ENCODE measurements at regions of chr5 and their contacts with region 1.

Region 1: GRCh38 chr5:126745259-126745992 is 31.5 kb upstream of the LMNB1 start:
- DNase-seq: no peak
- H3K4me3 Mint-ChIP-seq: no peak overlapping the region
- H3K27ac Mint-ChIP-seq: no peak overlapping the region
- H3K4me1 Mint-ChIP-seq: peaks cover 37% of the 10 kb centered on the region
- H3K27me3 Mint-ChIP-seq: no peaks in the 10 kb centered on the region

Region 2: DNA sequence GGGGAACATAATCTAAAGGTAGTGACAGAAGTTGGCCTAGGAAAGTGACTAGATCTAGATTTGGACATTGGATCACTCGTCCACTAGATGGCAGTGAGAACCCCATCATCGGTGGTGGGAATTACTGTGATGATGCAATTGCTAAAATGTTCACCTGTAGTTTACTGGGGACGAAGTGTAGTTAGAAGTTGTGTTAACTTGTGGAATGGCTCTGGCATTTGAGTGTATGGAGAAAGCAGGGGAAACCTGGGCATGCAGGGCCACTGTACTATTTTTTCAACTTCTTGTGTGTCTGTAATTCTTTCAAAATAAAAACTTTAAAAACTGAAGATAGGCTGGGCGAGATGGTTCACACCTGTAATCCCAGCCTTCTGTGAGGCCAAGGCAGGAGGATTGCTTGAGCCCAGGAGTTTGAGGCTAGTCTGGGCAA is 69.2 kb before region 1 on chr5:
- intact Hi-C with region 1: loop called (anchors 2 kb)
- DNase-seq: peak; percentile 91
- H3K4me3 Mint-ChIP-seq: no peak overlapping the region
- H3K27ac Mint-ChIP-seq: no peak overlapping the region
- H3K4me1 Mint-ChIP-seq: peaks cover 22% of the 10 kb centered on the region
- H3K27me3 Mint-ChIP-seq: no peaks in the 10 kb centered on the region

Region 3: GRCh38 chr5:126757713-126758357 is 12.4 kb after region 1 on chr5:
- intact Hi-C with region 1: loop called (anchors 1 kb)
- DNase-seq: no peak
- H3K4me3 Mint-ChIP-seq: peak overlapping the region; percentile 61
- H3K27ac Mint-ChIP-seq: peak overlapping the region; percentile 89
- H3K4me1 Mint-ChIP-seq: peaks cover 38% of the 10 kb centered on the region
- H3K27me3 Mint-ChIP-seq: no peaks in the 10 kb centered on the region

Region 4: GRCh38 chr5:126808521-126808988 is 63.1 kb after region 1 on chr5:
- intact Hi-C with region 1: loop called (anchors 5 kb)
- DNase-seq: no peak
- H3K4me3 Mint-ChIP-seq: no peak overlapping the region
- H3K27ac Mint-ChIP-seq: peak overlapping the region; percentile 82
- H3K4me1 Mint-ChIP-seq: peaks cover 47% of the 10 kb centered on the region
- H3K27me3 Mint-ChIP-seq: no peaks in the 10 kb centered on the region